Activated CD4-positive, alpha-beta T cell treated with anti-CD3 and anti-CD28 coated beads, Interleukin-2, amount 10 ng/mL, durations not matched to agents 24 days and 14 days (primary cell): ENCODE measurements at regions of chr3 and their contacts with region 1.

Region 1: DNA sequence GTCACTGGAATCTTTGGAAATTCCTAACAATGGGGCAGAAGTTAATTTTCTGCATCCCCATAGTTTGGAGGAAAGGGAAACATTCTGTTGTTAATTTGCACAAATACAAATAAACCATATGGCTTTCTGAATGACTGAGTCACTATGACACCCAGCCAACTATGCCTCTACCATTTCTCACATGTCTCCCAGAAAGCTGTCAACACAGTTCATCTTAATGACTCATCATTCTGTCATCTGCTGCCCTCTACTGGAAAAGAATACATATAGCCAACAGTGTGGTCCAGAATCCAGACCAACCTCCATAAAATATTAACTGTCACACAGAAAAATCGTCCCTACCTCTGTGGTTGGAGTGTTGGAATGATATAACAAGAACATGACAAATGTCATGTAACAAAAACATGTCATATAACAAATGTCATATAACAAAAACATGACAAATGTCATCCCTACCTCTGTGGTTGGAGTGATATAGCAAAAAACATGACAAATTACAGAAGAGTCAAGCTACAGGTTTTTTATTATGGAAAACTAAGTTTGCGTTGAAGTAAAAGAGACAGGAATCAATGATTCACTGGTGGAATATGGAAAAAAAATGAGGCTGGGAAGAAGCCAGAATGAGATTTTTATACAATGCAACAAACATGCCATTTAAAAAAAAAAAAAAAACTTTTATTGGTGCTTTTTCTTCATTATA is 47.7 kb upstream of the GYG1 start:
- DNase-seq: peak; percentile 75
- H3K4me3 Mint-ChIP-seq: no peak overlapping the region
- H3K27ac Mint-ChIP-seq: no peak overlapping the region
- H3K4me1 Mint-ChIP-seq: no peaks in the 10 kb centered on the region
- H3K27me3 Mint-ChIP-seq: peaks cover 7% of the 10 kb centered on the region

Region 2: DNA sequence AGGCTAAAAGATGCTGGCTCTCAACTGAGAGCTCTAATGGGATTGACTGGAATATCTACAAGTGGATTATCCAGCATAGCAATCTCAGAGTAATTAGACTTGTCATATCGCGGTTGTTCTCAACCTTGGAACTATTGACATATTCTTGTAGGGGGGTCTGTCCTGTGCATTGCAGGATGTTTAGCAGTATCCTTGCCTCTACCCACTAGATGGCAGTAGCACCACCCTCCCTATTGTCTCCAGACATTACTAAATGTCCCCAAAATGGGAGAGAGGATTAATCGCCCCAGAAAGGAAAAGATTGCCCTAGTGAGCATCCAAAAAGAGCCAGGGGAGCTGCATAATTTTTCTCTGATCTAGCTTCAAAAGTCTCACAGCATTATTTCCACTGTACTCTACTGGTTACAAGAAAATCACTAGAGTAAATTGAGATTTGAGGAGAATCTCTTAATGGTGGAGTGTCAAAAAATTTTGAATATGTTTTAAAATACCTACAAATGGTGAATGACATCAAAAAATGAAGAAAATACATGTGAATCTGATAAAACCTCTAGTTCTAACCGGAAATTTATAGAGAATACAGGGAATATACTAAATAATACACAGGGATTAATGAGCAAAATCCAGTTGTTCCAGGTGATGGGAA is 634.1 kb before region 1 on chr3:
- intact Hi-C with region 1: loop called (anchors 10 kb)
- DNase-seq: peak; percentile 58
- H3K4me3 Mint-ChIP-seq: no peak overlapping the region
- H3K27ac Mint-ChIP-seq: no peak overlapping the region
- H3K4me1 Mint-ChIP-seq: no peaks in the 10 kb centered on the region
- H3K27me3 Mint-ChIP-seq: peaks cover 2% of the 10 kb centered on the region

Region 3: GRCh38 chr3:148727247-148727646 is 216.4 kb before region 1 on chr3:
- intact Hi-C with region 1: loop called (anchors 10 kb)
- DNase-seq: peak; percentile 58
- H3K4me3 Mint-ChIP-seq: no peak overlapping the region
- H3K27ac Mint-ChIP-seq: no peak overlapping the region
- H3K4me1 Mint-ChIP-seq: no peaks in the 10 kb centered on the region
- H3K27me3 Mint-ChIP-seq: peaks cover 2% of the 10 kb centered on the region

Region 4: DNA sequence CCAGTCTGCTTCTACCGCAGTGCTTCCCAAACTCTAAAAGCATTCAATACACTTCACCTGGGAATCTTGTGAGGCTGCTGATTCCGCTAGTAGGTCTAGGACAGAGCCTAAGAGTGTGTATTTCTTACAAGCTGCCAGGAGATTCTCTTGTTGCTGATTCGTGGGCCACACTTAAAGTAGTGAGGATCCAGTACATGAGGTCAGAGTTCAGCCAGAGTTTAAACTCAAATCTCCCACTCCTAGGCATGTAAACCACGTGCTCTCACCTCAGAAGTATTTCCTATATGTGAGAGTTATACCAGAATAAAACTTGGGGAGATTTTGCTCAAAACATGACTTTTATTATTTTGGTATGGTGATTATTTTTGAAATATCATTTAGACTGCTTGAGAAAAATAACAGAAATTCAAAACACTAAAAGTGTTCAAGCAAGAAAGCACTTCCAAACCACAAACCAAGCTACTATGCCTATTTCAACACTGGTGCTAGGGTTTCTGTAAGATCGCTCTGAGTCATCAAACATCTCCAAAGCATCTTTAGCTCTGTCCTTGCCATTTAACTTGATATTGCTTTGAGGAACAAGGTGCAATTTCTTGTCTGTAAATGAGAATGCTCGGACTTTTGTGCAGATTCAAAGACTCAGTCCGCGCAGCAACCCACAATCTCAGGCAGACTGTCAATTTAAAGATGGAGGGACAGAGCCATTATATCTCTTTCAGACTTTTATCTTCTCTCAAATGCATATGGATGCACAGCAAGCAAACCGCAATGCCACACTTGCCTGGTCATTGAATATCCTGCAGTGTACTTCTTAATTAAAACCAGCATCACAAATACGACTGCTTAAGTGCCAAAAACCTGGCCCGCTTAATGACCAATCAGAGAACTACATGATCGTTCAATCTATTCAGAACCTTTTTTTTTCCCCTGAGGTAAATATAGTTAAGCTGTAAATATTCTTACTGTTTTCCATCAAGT is 186.1 kb before region 1 on chr3:
- intact Hi-C with region 1: no loop called
- DNase-seq: no peak
- H3K4me3 Mint-ChIP-seq: no peak overlapping the region
- H3K27ac Mint-ChIP-seq: no peak overlapping the region
- H3K4me1 Mint-ChIP-seq: no peaks in the 10 kb centered on the region
- H3K27me3 Mint-ChIP-seq: no peaks in the 10 kb centered on the region

Region 5: DNA sequence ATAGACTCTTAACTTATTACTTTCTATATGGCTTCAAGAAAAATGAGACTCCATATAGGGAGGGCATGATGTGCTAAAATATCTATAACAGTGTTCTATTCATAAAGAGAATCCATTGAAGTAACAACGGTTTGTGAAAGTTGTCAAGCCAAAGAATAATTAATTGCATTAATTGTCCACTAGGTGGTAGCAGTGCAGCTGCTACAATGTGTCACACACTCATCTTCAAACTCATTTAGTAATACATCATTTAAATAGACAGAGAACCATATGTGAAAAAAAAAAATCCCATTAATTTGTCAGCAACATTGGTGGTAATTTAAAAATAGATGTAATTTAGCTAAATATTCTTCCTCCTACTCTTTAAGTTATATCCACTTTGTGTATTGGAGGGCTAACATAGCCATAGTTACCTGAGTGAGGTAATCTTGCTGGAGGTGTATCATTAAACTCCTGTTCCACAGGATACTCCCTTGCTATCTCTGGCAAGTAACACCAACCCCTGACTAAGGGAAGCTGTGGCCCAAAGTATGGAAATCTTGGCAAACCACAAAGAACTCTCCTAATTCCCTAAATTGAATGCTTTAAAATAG is 82.3 kb before region 1 on chr3:
- intact Hi-C with region 1: loop called (anchors 1 kb)
- DNase-seq: no peak
- H3K4me3 Mint-ChIP-seq: no peak overlapping the region
- H3K27ac Mint-ChIP-seq: no peak overlapping the region
- H3K4me1 Mint-ChIP-seq: no peaks in the 10 kb centered on the region
- H3K27me3 Mint-ChIP-seq: peaks cover 15% of the 10 kb centered on the region